Common myeloid progenitor, CD34-positive (primary cell): ENCODE measurements at regions of chr5 and their contacts with region 1.

Region 1: DNA sequence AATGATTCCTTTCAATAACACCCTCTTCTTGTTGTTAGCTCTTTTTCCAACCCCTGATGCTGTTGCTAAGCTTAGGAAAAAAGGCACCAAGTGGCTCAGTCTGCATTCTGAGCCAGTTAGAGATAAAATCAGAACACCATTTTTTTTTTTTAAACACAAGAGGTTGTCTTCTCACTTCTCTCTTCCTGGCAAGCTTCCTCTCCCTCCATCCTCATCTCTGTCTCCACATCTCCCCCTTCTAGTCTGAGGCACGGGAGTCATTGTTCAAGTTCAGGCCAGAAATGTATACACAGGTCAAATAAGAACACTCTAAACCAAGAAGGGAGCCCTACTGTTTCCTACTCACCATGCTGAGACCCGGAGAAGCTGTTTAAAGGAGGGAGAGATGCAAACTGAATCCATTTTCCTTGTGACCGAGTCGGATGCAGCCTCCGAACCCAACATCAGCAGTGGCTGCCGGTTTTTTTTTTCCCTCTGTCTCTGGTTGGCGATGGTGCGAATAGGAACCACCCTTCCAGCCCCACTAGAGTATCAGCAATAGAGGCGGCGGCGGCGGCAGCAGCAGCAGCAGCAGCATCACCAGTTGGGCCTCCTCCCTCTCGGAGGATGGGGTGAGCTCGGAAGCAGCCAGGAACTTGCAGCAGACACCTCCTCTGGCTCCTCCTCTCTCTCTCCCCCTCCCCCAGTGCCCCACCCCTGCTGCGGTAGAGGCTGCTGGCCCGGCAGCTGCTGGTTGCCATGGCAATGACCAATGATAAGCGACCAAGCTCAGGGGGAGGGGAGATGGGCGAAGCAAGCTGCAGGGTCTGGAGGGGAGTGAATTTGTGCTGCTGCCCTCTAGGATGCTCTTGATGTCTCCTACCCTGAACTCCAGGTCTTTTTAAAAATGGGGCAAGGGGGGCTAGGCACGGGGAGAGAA is at the start of gene JAKMIP2:
- DNase-seq: peak; percentile 97 to 98 (median 98)
- H3K4me3 ChIP-seq: peak within 1 kb of the TSS; percentile 70 to 98 (median 80)
- H3K27ac ChIP-seq: peak within 1 kb of the TSS; percentile 34 to 88
- H3K4me1 ChIP-seq: peaks cover 0 to 26% (median 12%) of the 10 kb centered on the region in 4 experiments
- H3K27me3 ChIP-seq: no peaks in the 10 kb centered on the region

Region 2: GRCh38 chr5:147628058-147628895 is 154.1 kb before region 1 on chr5:
- CTCF ChIA-PET with region 1: interaction called, 19 read pairs
- POLR2A ChIA-PET with region 1: no interaction called
- DNase-seq: peak; percentile 76 to 86 (median 77)
- H3K4me3 ChIP-seq: no peak overlapping the region
- H3K27ac ChIP-seq: no peak overlapping the region
- H3K4me1 ChIP-seq: no peaks in the 10 kb centered on the region
- H3K27me3 ChIP-seq: no peaks in the 10 kb centered on the region

Region 3: DNA sequence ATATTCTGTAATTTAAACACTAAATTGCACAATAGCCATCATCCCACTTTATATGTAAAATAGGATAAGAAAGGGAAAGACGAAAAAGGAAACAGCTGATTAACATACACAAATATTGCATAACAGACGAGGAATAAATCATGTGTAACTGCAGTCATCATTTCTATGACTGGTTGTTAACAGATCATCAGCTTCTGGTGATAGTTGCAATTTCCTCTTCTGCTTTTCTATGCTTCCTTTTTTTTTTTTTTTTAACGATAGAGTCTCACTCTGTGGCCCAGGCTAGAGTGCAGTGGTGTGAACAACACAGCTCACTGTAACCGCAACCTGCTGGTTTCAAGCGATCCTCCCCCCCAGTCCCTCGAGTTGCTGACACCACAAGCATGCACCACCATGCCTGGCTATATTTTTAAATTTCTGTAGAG is 22.7 kb after region 1 on chr5:
- CTCF ChIA-PET with region 1: interaction called, 11 read pairs
- POLR2A ChIA-PET with region 1: interaction called, 3 read pairs
- DNase-seq: peak; percentile 82 to 96 (median 93)
- H3K4me3 ChIP-seq: peak overlapping the region in 1 of 7 experiments; percentile 29
- H3K27ac ChIP-seq: no peak overlapping the region
- H3K4me1 ChIP-seq: peaks cover 9 to 28% (median 21%) of the 10 kb centered on the region in 4 experiments
- H3K27me3 ChIP-seq: no peaks in the 10 kb centered on the region